ENCODE measurements at regions of chr6 and their contacts with region 1.

Region 1: GRCh38 chr6:122471107-122472021 is at the start of gene SERINC1:
- DNase-seq: peak; percentile 97
- H3K4me3 ChIP-seq: peak within 1 kb of the TSS; percentile 70 to 92 (median 85)
- H3K27ac ChIP-seq: peak within 1 kb of the TSS; percentile 92 to 98 (median 94)
- H3K4me1 ChIP-seq: peaks cover 0 to 46% (median 21%) of the 10 kb centered on the region in 4 donors
- H3K27me3 ChIP-seq: no peaks in the 10 kb centered on the region
- CTCF ChIP-seq: no peak
- EP300 ChIP-seq: no peak
- POLR2A ChIP-seq: peak; percentile 90
- total RNA-seq, gene SERINC1: 220 to 301 (median 239) TPM

Region 2: GRCh38 chr6:122399384-122400158 is 71.8 kb before region 1 on chr6 and contains the start of gene HSF2:
- intact Hi-C with region 1: loop called (anchors 1 kb)
- DNase-seq: peak; percentile 99
- H3K4me3 ChIP-seq: peak within 1 kb of the TSS; percentile 67 to 94 (median 78)
- H3K27ac ChIP-seq: peak within 1 kb of the TSS; percentile 84 to 90 (median 88)
- H3K4me1 ChIP-seq: peaks cover 0 to 40% (median 29%) of the 10 kb centered on the region in 4 donors
- H3K27me3 ChIP-seq: no peaks in the 10 kb centered on the region
- CTCF ChIP-seq: no peak
- EP300 ChIP-seq: no peak
- POLR2A ChIP-seq: peak in 1 of 2 donors; percentile 21
- total RNA-seq, gene HSF2: 22.4 to 37.1 (median 33.2) TPM